B cell (primary cell): ENCODE measurements at regions of chr9 and their contacts with region 1.

Region 1: DNA sequence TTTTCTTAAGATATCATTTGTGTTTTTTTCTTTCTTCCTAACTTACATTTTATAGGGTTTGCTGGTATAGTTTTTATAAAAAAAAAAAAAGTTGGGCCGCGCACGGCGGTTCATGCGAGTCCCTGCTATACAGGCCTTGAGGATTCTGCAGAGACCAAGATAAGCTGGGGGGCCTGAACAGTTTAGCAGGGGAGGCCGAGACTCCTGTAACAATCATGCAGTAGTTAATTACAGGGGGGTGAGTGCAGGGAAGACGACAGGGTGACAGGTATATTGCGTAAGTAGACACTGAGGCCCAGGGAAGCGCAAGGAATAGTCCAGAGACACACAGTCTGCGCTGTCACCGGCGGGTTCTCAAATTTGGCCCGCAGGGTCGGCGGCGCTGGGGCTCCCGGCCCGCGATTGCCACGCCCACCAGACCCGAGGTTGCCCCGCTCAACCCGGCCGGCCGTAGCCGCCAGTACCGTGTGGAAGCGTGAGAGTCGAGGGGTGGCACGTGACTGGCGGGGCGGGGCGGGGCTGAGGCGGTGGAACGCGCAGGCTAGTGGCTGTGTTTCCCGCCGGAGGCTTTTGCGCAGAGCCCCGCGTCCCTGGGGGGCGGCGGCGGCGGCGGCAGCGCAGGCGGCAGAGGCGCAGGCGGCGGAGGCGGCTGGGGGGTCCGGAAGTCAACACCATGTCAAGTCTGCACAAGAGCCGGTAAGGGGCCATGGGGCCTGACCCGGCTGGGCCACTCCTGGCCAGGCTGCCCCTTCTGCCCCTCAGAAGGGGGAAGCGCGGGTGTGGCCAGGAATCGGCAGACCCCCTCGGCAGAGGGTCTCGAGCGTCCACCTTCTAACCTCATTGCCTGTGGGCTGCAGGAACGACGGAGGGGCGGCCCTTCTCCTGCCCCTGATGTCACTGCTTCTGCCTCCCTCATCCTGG is at the start of gene TBC1D13:
- DNase-seq: peak; percentile 96
- ATAC-seq: peak; percentile 96
- H3K4me3 ChIP-seq: peak within 1 kb of the TSS; percentile 71 to 94 (median 91)
- H3K4me3 Mint-ChIP-seq: peak within 1 kb of the TSS; percentile 91
- H3K27ac ChIP-seq: peak within 1 kb of the TSS; percentile 73 to 86
- H3K27ac Mint-ChIP-seq: peak within 1 kb of the TSS; percentile 85
- H3K4me1 ChIP-seq: peaks cover 18 to 21% of the 10 kb centered on the region in 2 donors
- H3K4me1 Mint-ChIP-seq: peaks cover 24% of the 10 kb centered on the region
- H3K27me3 ChIP-seq: no peaks in the 10 kb centered on the region
- H3K27me3 Mint-ChIP-seq: no peaks in the 10 kb centered on the region
- CTCF ChIP-seq: no peak
- total RNA-seq, gene TBC1D13: 29.1 and 31.8 TPM in 2 replicates

Region 2: GRCh38 chr9:128043467-128043868 is 743.5 kb before region 1 on chr9:
- CTCF ChIA-PET with region 1: no interaction called
- POLR2A ChIA-PET with region 1: no interaction called
- intact Hi-C with region 1: no loop called
- DNase-seq: no peak
- ATAC-seq: no peak
- H3K4me3 ChIP-seq: no peak overlapping the region
- H3K4me3 Mint-ChIP-seq: no peak overlapping the region
- H3K27ac ChIP-seq: no peak overlapping the region
- H3K27ac Mint-ChIP-seq: no peak overlapping the region
- H3K4me1 ChIP-seq: no peaks in the 10 kb centered on the region
- H3K4me1 Mint-ChIP-seq: no peaks in the 10 kb centered on the region
- H3K27me3 ChIP-seq: no peaks in the 10 kb centered on the region
- H3K27me3 Mint-ChIP-seq: peaks cover 3% of the 10 kb centered on the region
- CTCF ChIP-seq: no peak

Region 3: DNA sequence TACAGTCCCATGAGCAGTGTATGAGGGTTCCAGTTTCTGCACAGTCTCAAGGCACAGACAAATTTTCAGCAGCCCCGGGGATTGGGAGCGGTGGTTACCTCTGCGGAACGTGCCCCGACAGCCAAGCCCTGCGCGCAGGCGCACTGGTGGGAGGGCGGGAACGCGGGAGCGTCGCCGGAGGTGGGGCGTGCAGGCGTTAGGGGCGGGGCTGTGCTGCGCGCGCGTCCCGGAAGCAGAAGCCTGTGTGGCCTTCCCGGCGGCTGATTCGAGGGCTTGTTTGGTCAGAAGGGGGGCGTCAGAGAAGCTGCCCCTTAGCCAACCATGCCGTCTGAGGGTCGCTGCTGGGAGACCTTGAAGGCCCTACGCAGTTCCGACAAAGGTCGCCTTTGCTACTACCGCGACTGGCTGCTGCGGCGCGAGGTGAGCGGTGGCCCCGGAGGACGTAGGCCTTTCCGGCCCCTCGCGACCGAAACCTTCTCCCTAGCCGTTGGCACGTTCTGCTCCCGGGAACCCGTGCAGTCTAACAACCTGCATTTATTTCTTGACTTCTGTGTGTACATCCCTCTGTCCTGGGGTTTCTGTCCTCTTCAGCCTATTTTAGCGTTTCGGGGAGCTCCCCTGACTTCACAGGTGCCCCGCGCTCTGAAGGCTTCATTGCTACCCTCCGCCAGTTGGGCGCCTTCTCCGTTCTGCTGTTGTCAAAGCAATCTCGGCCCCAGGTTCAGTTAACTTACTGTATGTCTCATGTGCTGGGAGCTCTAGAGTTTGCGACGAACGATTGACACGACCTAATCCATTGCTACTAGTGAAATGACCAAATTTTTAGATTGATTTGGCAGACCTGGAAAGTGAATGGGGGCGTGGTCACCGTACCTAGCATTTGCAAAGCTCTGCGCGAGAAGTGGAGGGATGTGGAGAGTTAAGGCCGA is 282.2 kb before region 1 on chr9 and contains the start of gene GLE1:
- CTCF ChIA-PET with region 1: no interaction called
- POLR2A ChIA-PET with region 1: no interaction called
- intact Hi-C with region 1: loop called (anchors 1 kb)
- DNase-seq: peak; percentile 97
- ATAC-seq: peak; percentile 93
- H3K4me3 ChIP-seq: peak within 1 kb of the TSS; percentile 85 to 97 (median 87)
- H3K4me3 Mint-ChIP-seq: peak within 1 kb of the TSS; percentile 100
- H3K27ac ChIP-seq: peak within 1 kb of the TSS; percentile 69 to 80
- H3K27ac Mint-ChIP-seq: peak within 1 kb of the TSS; percentile 99
- H3K4me1 ChIP-seq: peaks cover 8 to 13% of the 10 kb centered on the region in 2 donors
- H3K4me1 Mint-ChIP-seq: peaks cover 23% of the 10 kb centered on the region
- H3K27me3 ChIP-seq: no peaks in the 10 kb centered on the region
- H3K27me3 Mint-ChIP-seq: no peaks in the 10 kb centered on the region
- CTCF ChIP-seq: no peak
- total RNA-seq, gene GLE1: 30.3 and 31.9 TPM in 2 replicates

Region 4: GRCh38 chr9:128723866-128724743 is 62.8 kb before region 1 on chr9 and contains the start of gene ZDHHC12:
- CTCF ChIA-PET with region 1: interaction called, 4 read pairs
- POLR2A ChIA-PET with region 1: no interaction called
- intact Hi-C with region 1: loop called (anchors 1 kb)
- DNase-seq: peak; percentile 99
- ATAC-seq: peak; percentile 97
- H3K4me3 ChIP-seq: peak within 1 kb of the TSS; percentile 62 to 96 (median 92)
- H3K4me3 Mint-ChIP-seq: peak within 1 kb of the TSS; percentile 97
- H3K27ac ChIP-seq: peak within 1 kb of the TSS; percentile 66 to 82
- H3K27ac Mint-ChIP-seq: peak within 1 kb of the TSS; percentile 91
- H3K4me1 ChIP-seq: peaks cover 18 to 23% of the 10 kb centered on the region in 2 donors
- H3K4me1 Mint-ChIP-seq: peaks cover 31% of the 10 kb centered on the region
- H3K27me3 ChIP-seq: no peaks in the 10 kb centered on the region
- H3K27me3 Mint-ChIP-seq: no peaks in the 10 kb centered on the region
- CTCF ChIP-seq: no peak
- total RNA-seq, gene ZDHHC12: 25.3 and 28.5 TPM in 2 replicates

Region 5: DNA sequence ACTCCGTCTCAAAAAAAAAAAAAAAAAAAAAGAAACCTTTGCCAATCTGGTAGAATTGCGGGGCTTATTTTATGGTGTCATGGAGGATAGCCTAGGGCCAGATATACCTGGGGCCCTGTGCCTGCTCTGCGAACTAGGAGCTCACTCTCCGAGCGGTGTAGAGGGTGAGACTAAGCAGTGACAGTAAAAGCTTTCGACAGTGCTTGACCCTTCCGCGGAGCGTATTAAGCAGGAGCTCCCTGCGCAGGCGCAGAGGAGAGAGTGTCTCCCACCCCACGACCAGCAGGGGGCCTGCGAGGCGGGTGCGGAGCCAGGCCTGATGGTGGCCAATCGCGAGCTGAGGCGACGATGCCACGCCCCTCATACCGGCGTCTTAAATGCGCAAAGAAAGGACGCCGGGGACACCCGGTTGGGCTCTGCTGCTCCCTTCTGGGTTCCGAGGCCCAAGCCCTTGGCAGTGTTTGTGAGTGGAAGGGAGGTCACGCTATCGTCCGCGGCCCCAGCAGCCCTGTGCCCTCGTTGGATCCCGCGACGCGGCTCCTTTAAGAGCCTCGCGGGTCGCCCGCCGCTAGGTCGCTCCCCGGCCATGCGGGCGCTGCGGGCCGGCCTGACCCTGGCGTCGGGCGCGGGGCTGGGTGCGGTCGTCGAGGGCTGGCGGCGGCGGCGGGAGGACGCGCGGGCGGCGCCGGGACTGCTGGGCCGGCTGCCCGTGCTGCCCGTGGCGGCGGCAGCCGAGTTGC is 31.3 kb after region 1 on chr9 and contains the start of gene ENDOG:
- CTCF ChIA-PET with region 1: interaction called, 3 read pairs
- POLR2A ChIA-PET with region 1: interaction called, 4 read pairs
- intact Hi-C with region 1: loop called (anchors 1 kb)
- DNase-seq: peak; percentile 97
- ATAC-seq: peak; percentile 95
- H3K4me3 ChIP-seq: peak within 1 kb of the TSS; percentile 68 to 76 (median 69)
- H3K4me3 Mint-ChIP-seq: peak within 1 kb of the TSS; percentile 95
- H3K27ac ChIP-seq: peak within 1 kb of the TSS in 1 of 2 donors; percentile 53
- H3K27ac Mint-ChIP-seq: peak within 1 kb of the TSS; percentile 94
- H3K4me1 ChIP-seq: peaks cover 5 to 16% of the 10 kb centered on the region in 2 donors
- H3K4me1 Mint-ChIP-seq: peaks cover 14% of the 10 kb centered on the region
- H3K27me3 ChIP-seq: no peaks in the 10 kb centered on the region
- H3K27me3 Mint-ChIP-seq: no peaks in the 10 kb centered on the region
- CTCF ChIP-seq: peak; percentile 95
- total RNA-seq, gene ENDOG: 17.1 and 19.3 TPM in 2 replicates

Region 6: DNA sequence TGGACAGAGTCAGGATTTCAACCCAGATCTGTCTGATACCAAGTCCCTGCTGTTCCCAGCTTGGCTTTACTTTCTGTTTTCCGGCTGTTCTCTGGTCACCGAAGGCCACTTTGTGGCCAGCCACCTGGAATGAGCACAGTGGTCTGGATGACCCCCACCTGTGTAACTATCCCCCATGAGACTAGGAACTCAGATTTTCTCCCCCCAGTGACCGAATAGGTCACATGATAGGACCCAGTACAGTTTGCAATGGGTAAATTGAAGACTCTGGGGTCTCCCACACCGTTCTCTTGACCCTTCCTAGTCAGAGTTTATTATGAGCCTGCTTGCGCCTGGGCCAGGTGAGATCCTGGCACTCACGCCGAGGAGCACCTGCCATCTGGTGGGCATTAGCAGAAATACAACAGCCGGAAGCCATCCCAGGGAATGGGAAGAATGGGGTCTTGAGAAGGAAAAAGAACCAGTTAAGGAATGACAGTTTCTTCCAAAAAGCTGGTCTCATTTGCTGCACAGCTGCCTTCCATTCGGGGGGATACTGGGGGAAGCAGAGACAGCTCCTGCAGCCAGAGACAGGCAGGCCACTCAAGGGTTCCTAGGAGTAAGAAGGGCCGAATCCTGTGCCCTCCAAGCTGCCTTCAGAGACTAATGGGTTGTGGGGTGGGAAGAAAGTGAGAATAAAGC is 140.9 kb after region 1 on chr9:
- CTCF ChIA-PET with region 1: interaction called, 10 read pairs
- POLR2A ChIA-PET with region 1: no interaction called
- intact Hi-C with region 1: no loop called
- DNase-seq: peak; percentile 70
- ATAC-seq: peak; percentile 82
- H3K4me3 ChIP-seq: no peak overlapping the region
- H3K4me3 Mint-ChIP-seq: no peak overlapping the region
- H3K27ac ChIP-seq: no peak overlapping the region
- H3K27ac Mint-ChIP-seq: no peak overlapping the region
- H3K4me1 ChIP-seq: peaks cover 0 to 4% of the 10 kb centered on the region in 2 donors
- H3K4me1 Mint-ChIP-seq: peaks cover 6% of the 10 kb centered on the region
- H3K27me3 ChIP-seq: no peaks in the 10 kb centered on the region
- H3K27me3 Mint-ChIP-seq: peaks cover 2% of the 10 kb centered on the region
- CTCF ChIP-seq: peak; percentile 90